ENCODE measurements at regions of chr1 and their contacts with region 1.

Region 1: DNA sequence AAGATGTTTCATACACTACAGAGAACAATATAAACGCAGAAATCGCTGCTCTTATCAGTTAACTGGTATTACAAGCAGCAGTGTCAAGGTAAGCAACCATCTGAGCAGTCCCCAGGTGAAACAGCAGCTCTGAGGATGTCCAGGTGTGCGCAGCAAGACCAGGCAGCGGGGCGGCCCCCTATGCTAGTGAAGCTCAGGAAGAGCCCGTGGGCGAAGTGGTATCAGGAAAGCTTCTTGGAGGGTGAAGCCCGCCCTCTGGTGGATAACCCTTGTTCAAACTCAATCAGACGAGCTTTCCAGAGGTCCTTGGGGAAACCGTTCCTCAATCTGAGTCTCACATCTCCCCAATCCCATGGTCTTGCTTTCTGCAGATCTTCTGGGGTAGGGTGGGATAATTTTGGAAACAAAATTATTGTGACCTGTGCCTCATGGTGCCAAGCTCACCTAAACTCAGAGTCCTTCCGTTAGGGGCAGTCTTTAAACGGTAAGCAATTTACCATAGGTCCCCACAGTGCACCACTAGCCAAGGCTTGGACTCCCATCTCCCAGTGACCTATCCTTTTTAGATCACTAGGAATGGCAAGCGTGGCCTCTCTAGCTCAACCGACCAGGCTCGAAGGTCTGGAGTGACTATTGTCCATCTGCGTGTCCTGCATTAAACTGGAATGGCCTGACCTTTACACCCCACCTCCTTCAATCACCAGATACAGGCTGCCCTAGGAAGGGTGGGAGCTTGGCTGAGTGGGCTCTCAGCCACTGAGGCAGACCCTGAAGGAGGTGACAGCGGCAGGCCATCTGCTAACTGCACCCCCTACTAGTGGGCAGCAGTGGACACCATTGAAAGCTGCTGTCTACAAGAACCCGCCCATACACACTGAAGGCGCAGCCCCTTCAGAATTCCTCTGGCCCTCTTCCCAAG is 13.6 kb upstream of the FAM110D start:
- DNase-seq: peak; percentile 76 to 82 (median 77)
- ATAC-seq: peak; percentile 98 to 100 (median 99)
- H3K4me3 ChIP-seq: no peak overlapping the region
- H3K27ac ChIP-seq: no peak overlapping the region
- H3K4me1 ChIP-seq: no peaks in the 10 kb centered on the region
- H3K27me3 ChIP-seq: no peaks in the 10 kb centered on the region
- CTCF ChIP-seq: peak; percentile 74 to 85 (median 82)
- POLR2A ChIP-seq: no peak

Region 2: DNA sequence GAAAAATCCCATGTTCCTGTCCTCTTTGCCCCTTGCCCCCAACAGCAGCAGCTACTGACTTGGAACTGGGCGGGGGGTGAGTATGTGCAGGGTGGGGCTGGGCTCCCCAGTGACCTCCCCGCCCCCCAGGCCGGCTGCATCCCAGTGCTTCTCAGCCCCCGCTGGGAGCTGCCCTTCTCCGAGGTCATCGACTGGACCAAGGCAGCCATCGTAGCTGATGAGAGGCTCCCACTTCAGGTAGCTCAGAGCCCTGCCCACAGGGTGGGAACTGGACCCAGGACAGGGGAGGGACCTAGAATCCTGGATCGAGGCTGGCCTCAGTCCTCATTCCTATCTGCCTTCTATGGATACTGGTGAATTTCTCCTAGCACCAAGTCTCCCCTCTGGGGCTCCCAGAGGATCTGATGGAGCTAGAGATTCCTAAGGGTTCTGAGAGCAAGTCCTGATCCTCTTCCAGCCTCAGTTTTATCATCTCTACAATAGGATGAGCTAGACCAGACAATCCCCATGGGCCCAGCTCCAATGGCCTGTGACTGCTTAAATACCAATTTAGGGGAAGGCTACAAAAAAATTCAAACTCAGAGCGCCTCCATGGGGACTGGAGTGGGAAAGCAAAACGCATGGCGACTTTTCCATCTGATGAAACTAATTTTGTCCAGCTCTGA is 115.7 kb before region 1 on chr1:
- intact Hi-C with region 1: loop called (anchors 5 to 10 kb)
- DNase-seq: no peak
- ATAC-seq: no peak
- H3K4me3 ChIP-seq: no peak overlapping the region
- H3K27ac ChIP-seq: no peak overlapping the region
- H3K4me1 ChIP-seq: no peaks in the 10 kb centered on the region
- H3K27me3 ChIP-seq: no peaks in the 10 kb centered on the region
- CTCF ChIP-seq: no peak
- POLR2A ChIP-seq: no peak

Region 3: DNA sequence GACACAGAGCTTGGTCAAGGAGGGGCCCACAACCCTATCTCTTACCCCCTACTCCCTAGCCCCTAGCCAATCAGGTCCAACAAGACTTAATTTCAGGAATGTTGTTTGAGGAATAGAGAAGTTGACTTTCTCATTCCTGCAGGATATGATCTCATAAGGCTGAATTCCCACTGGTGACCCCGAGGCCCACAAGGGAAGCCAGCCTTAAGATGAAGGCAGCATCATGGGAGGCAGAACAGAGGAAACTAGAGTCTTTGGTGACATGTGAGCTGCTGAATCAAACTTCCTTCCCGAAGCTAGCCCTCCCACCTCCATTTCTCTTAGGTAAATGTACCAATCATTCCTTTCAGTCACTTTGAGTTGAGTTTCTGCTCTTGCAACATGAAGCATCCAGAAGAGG is 42.8 kb before region 1 on chr1:
- intact Hi-C with region 1: loop called (anchors 5 kb)
- DNase-seq: peak in 1 of 3 donors; percentile 7
- ATAC-seq: no peak
- H3K4me3 ChIP-seq: no peak overlapping the region
- H3K27ac ChIP-seq: no peak overlapping the region
- H3K4me1 ChIP-seq: no peaks in the 10 kb centered on the region
- H3K27me3 ChIP-seq: no peaks in the 10 kb centered on the region
- CTCF ChIP-seq: no peak
- POLR2A ChIP-seq: no peak

Region 4: DNA sequence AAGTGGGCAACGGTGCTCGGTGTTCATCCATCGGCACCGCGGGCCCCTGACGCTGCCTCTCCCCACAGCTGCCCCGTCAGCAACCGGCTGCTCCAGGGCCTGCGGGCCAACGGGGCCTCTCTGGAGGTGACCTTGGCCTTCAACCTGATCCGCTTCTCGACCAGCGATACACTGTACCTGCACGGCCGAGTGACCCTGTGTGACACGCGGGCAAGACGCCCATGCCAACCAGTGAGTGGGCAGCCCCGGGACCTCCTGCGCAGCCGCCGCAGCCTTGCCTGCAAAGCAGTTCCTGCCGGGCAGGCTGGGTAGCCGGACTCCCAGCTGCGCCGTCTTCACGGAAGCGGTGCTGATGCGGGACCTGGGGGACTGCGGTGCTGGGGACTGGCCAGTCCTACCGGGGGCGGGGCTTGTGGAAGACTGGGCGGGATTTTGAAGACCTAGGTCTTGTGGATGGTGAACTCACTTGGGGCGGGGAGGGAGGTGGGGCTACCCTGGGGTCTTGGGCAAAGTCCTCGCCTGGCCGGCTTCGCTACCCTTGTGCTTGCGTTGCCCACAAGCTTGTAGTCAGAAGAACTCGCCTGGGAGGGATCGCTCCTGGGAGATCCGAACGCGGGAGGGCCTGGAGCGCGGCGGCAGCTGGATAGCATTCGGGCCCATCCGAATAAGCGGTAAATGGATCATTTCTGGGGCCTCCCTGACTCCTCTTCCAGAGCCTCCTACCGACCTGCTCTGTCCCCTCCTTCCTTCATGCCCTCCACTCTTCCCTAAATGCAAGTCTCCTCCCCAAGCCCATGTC is 79.9 kb after region 1 on chr1:
- intact Hi-C with region 1: no loop called
- DNase-seq: peak; percentile 92 to 98 (median 96)
- ATAC-seq: peak; percentile 95 to 98 (median 95)
- H3K4me3 ChIP-seq: peak overlapping the region; percentile 56 to 70 (median 60)
- H3K27ac ChIP-seq: peak overlapping the region in 2 of 3 donors; percentile 18 to 50
- H3K4me1 ChIP-seq: no peaks in the 10 kb centered on the region
- H3K27me3 ChIP-seq: no peaks in the 10 kb centered on the region
- CTCF ChIP-seq: no peak
- POLR2A ChIP-seq: peak; percentile 52

Region 5: DNA sequence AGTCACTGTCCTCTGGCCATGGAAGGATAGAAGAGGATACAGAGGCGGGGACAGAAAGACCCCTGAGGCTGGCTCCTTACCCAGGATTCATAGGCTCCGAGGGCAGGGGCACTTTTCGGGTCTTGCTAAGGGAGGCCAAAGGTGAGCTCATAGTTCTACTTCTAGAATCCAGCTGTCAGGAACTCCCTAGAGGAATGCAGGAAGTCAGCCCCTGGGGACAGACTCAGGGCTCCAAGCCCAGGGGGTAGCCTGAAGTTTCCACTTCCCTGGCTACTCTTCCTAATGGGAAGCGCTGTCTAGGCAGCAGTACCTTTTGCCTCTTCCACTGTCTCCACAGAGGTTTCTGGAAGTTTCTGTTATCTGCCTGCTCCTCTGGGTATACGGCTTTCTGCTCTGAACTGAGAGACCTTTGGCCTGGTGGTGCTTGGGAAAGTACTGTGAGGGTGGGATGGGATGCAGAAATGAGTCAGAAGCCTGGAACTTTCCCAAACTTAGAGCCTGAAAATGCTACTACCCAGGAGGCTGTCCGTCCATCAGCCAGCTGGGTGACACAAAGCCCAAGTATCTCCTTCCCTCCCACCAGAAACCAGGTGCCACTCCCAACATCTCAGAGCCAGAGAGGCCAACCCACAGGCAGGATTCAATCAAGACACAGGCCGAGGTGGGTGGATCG is 157.6 kb after region 1 on chr1:
- intact Hi-C with region 1: no loop called
- DNase-seq: no peak
- ATAC-seq: peak in 1 of 4 donors; percentile 48
- H3K4me3 ChIP-seq: no peak overlapping the region
- H3K27ac ChIP-seq: no peak overlapping the region
- H3K4me1 ChIP-seq: peaks cover 0 to 5% (median 3%) of the 10 kb centered on the region in 4 donors
- H3K27me3 ChIP-seq: no peaks in the 10 kb centered on the region
- CTCF ChIP-seq: no peak
- POLR2A ChIP-seq: no peak

Region 6: DNA sequence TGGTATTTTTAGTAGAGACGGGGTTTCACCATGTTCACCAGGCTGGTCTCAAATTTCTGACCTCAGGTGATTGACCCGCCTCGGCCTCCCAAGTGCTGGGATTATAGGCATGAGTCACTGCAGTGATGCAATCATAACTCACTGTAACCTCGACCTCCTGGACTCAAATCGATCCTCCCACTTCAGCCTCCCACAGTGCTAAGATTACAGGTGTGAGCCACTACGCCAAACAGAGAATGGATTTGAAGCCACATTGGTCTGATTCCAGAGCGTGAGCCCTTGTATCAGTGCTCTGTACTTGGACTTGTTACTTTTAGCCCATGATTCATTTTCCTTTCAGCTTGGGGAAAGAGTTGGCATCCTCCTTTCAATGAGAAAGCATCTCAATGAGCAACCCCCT is 242.1 kb after region 1 on chr1:
- intact Hi-C with region 1: no loop called
- DNase-seq: peak in 1 of 3 donors; percentile 29
- ATAC-seq: peak in 2 of 4 donors; percentile 65 to 86
- H3K4me3 ChIP-seq: no peak overlapping the region
- H3K27ac ChIP-seq: no peak overlapping the region
- H3K4me1 ChIP-seq: no peaks in the 10 kb centered on the region
- H3K27me3 ChIP-seq: no peaks in the 10 kb centered on the region
- CTCF ChIP-seq: no peak
- POLR2A ChIP-seq: no peak

Measured in right lobe of liver (tissue), 6 donors.